PC-3 (cell line): ENCODE measurements at regions of chr3 and their contacts with region 1.

Region 1: GRCh38 chr3:192444096-192444790 is 283.1 kb downstream of the FGF12 start:
- DNase-seq: peak; percentile 80
- ATAC-seq: peak; percentile 92
- H3K4me3 ChIP-seq: no peak overlapping the region
- H3K27ac ChIP-seq: no peak overlapping the region
- H3K4me1 ChIP-seq: no peaks in the 10 kb centered on the region
- H3K27me3 ChIP-seq: peaks cover 64% of the 10 kb centered on the region
- CTCF ChIP-seq: peak; percentile 98

Region 2: GRCh38 chr3:191051037-191051436 is 1393.2 kb before region 1 on chr3:
- CTCF ChIA-PET with region 1: no interaction called
- POLR2A ChIA-PET with region 1: no interaction called
- intact Hi-C with region 1: loop called (anchors 5 kb)
- DNase-seq: peak; percentile 78
- ATAC-seq: peak; percentile 78
- H3K4me3 ChIP-seq: no peak overlapping the region
- H3K27ac ChIP-seq: no peak overlapping the region
- H3K4me1 ChIP-seq: no peaks in the 10 kb centered on the region
- H3K27me3 ChIP-seq: no peaks in the 10 kb centered on the region
- CTCF ChIP-seq: peak; percentile 71

Region 3: DNA sequence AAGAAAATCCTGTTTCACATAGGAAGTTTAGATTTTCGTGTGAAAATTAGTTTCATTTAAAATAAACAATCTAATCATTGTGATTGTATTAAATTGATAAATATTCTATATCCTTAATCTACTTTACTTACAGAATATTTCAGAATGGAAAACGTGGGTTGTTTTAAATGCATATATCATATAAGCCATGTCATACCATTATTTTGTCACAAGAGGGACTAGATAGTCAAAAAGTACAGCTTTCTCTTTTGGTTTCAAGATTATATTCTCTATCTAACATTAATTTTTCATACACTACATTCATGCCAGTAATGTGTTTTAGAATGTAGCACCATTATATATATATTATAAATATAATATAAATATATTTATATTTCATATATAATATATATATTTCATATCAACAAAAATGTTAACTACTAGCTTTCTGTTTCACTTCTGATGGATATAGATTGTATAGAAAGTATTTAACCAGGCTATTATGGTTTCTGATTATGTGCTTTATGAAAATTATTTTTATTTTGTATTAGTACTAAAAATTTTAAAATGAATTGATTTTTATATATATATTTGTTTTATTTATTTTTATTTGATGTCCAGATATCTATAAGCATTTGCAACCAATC is 1199.9 kb before region 1 on chr3:
- CTCF ChIA-PET with region 1: no interaction called
- POLR2A ChIA-PET with region 1: no interaction called
- intact Hi-C with region 1: loop called (anchors 10 kb)
- DNase-seq: peak; percentile 56
- ATAC-seq: peak; percentile 19; the same call in 1 of the 2 replicates
- H3K4me3 ChIP-seq: no peak overlapping the region
- H3K27ac ChIP-seq: no peak overlapping the region
- H3K4me1 ChIP-seq: peaks cover 44% of the 10 kb centered on the region
- H3K27me3 ChIP-seq: no peaks in the 10 kb centered on the region
- CTCF ChIP-seq: peak; percentile 65

Region 4: GRCh38 chr3:191412759-191413158 is 1031.5 kb before region 1 on chr3:
- CTCF ChIA-PET with region 1: no interaction called
- POLR2A ChIA-PET with region 1: no interaction called
- intact Hi-C with region 1: loop called (anchors 1 kb)
- DNase-seq: peak; percentile 92
- ATAC-seq: peak; percentile 89
- H3K4me3 ChIP-seq: no peak overlapping the region
- H3K27ac ChIP-seq: no peak overlapping the region
- H3K4me1 ChIP-seq: peaks cover 11% of the 10 kb centered on the region
- H3K27me3 ChIP-seq: no peaks in the 10 kb centered on the region
- CTCF ChIP-seq: no peak

Region 5: DNA sequence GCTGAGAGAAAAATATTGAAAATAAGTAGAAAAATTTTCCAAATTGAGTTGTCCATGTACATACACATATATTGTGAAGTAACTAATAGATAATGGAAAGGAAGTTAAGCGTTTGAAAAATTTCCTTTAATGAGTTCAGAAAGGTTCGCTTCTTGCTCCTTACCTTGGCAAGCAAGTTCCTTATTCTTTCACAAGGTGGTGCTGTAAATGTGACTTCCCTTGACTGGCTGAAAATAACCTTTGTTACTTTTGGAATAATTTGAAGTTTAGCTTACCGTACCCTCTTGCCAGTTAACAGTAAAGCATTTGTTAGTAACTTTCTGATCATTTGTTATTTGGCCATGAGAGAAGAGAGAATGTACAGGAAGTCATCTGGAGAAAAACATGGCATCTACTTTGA is 941.7 kb before region 1 on chr3:
- CTCF ChIA-PET with region 1: interaction called, 5 read pairs
- POLR2A ChIA-PET with region 1: no interaction called
- intact Hi-C with region 1: loop called (anchors 1 kb)
- DNase-seq: peak; percentile 51
- ATAC-seq: peak; percentile 50
- H3K4me3 ChIP-seq: no peak overlapping the region
- H3K27ac ChIP-seq: no peak overlapping the region
- H3K4me1 ChIP-seq: peaks cover 3% of the 10 kb centered on the region; the same call in 1 of the 2 replicates
- H3K27me3 ChIP-seq: peaks cover 55% of the 10 kb centered on the region
- CTCF ChIP-seq: peak; percentile 76

Region 6: DNA sequence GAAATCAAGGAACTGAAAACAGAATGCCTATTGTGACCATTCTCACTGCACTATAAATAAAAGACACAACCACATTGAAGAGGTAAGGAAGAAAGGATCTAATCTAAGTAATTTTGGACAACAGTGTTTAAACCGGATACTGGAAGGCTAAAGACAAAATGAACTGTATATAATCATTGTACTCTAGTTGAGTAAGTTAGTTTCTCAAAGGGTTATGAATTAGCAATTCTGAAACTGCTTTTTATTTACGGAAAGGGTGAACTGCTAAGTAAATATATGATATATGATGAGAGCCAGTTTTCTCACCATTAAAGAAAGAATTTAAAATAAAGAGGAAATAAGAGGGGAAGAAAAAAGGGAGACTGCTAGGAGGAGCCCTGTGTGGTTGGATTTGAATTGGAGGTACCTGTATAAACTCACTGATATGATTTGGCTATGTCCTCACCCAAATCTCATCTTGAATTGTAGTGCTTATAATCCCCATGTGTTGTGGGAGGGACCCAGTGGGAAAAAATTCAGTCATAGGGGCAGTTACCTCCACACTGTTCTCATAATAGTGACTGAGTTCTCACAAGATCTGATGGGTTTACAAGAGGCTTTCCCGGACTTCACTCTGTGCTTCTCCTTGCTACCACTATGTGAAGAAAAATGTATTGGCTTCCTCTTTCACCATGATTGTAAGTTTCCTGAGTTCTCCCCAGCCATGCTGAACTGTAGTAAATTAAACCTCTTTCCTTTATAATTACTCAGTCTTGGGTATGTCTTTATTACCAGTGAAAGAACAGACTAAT is 375.6 kb before region 1 on chr3:
- CTCF ChIA-PET with region 1: no interaction called
- POLR2A ChIA-PET with region 1: no interaction called
- intact Hi-C with region 1: no loop called
- DNase-seq: no peak
- ATAC-seq: no peak
- H3K4me3 ChIP-seq: no peak overlapping the region
- H3K27ac ChIP-seq: no peak overlapping the region
- H3K4me1 ChIP-seq: no peaks in the 10 kb centered on the region
- H3K27me3 ChIP-seq: no peaks in the 10 kb centered on the region
- CTCF ChIP-seq: no peak

Region 7: DNA sequence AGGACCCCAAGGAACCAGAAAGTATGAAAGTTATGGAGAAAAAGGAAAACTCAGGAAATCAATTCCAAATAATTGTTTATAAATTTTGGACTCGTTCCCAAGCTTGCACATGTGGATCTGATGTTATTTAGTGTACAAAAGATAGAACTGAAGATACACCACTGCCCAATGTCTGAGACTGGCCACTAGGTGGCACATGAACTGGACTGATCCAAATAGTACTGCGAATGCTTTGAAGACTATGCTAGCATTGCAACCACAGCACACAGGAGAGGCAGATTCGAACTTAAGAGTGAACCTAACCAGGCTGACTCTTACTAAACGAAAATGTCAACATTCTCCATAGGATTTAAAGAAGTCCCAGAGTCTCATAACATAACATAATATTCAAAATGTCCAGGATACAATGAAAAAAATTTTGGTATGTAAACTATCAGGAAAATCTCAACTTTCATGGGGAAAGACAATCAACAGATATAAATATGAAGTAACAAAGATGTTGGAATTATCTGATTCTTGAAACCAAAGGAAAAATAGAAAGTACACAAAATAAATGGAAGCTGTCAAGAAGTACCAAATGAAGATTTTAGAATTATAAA is 313.6 kb before region 1 on chr3:
- CTCF ChIA-PET with region 1: no interaction called
- POLR2A ChIA-PET with region 1: no interaction called
- intact Hi-C with region 1: loop called (anchors 1 kb)
- DNase-seq: peak; percentile 66
- ATAC-seq: peak; percentile 81
- H3K4me3 ChIP-seq: no peak overlapping the region
- H3K27ac ChIP-seq: no peak overlapping the region
- H3K4me1 ChIP-seq: no peaks in the 10 kb centered on the region
- H3K27me3 ChIP-seq: no peaks in the 10 kb centered on the region
- CTCF ChIP-seq: peak; percentile 86

Region 8: GRCh38 chr3:192188218-192188835 is 255.9 kb before region 1 on chr3:
- CTCF ChIA-PET with region 1: no interaction called
- POLR2A ChIA-PET with region 1: no interaction called
- intact Hi-C with region 1: loop called (anchors 1 kb)
- DNase-seq: peak; percentile 71
- ATAC-seq: peak; percentile 73
- H3K4me3 ChIP-seq: no peak overlapping the region
- H3K27ac ChIP-seq: no peak overlapping the region
- H3K4me1 ChIP-seq: no peaks in the 10 kb centered on the region
- H3K27me3 ChIP-seq: peaks cover 6% of the 10 kb centered on the region; the same call in 1 of the 2 replicates
- CTCF ChIP-seq: peak; percentile 88

Region 9: GRCh38 chr3:192273513-192273912 is 170.7 kb before region 1 on chr3:
- CTCF ChIA-PET with region 1: no interaction called
- POLR2A ChIA-PET with region 1: no interaction called
- intact Hi-C with region 1: no loop called
- DNase-seq: peak; percentile 16
- ATAC-seq: no peak; the same call in 1 of the 2 replicates
- H3K4me3 ChIP-seq: no peak overlapping the region
- H3K27ac ChIP-seq: no peak overlapping the region
- H3K4me1 ChIP-seq: no peaks in the 10 kb centered on the region
- H3K27me3 ChIP-seq: peaks cover 15% of the 10 kb centered on the region; the same call in 1 of the 2 replicates
- CTCF ChIP-seq: no peak

Region 10: DNA sequence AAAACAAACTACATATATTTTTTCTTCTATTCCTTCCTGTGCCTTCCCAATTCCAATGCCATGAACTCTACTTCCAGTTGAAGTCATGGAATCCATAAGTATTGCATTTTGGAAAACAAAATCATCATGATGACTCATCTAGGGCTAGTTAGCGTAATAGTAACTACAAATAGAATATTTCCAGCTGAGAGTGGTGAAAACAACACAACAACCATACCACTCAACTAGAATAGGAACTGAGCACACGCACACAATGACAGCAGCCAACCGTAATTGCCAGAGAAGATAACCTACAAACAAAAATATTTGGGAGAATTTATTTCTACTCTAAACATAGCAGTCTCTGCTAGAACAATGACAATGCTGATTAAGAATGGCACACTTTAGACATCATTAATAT is 57.2 kb after region 1 on chr3:
- CTCF ChIA-PET with region 1: no interaction called
- POLR2A ChIA-PET with region 1: no interaction called
- intact Hi-C with region 1: no loop called
- DNase-seq: no peak
- ATAC-seq: no peak
- H3K4me3 ChIP-seq: no peak overlapping the region
- H3K27ac ChIP-seq: no peak overlapping the region
- H3K4me1 ChIP-seq: no peaks in the 10 kb centered on the region
- H3K27me3 ChIP-seq: peaks cover 60% of the 10 kb centered on the region
- CTCF ChIP-seq: no peak